Right lobe of liver (tissue), 6 donors: ENCODE measurements at regions of chr10 and their contacts with region 1.

Region 1: GRCh38 chr10:77641788-77642397 is 4.3 kb upstream of the KCNMA1 start:
- DNase-seq: peak in 1 of 3 donors; percentile 73
- ATAC-seq: peak; percentile 51 to 76 (median 70)
- H3K4me3 ChIP-seq: no peak overlapping the region
- H3K27ac ChIP-seq: no peak overlapping the region
- H3K4me1 ChIP-seq: peaks cover 0 to 5% (median 0%) of the 10 kb centered on the region in 4 donors
- H3K27me3 ChIP-seq: no peaks in the 10 kb centered on the region
- CTCF ChIP-seq: peak; percentile 83 to 89 (median 86)
- POLR2A ChIP-seq: no peak

Region 2: GRCh38 chr10:77165445-77166208 is 476.3 kb before region 1 on chr10:
- intact Hi-C with region 1: loop called in 1 of 2 experiments (anchors 5 kb)
- DNase-seq: peak in 1 of 3 donors; percentile 53
- ATAC-seq: peak; percentile 86 to 91 (median 90)
- H3K4me3 ChIP-seq: no peak overlapping the region
- H3K27ac ChIP-seq: no peak overlapping the region
- H3K4me1 ChIP-seq: no peaks in the 10 kb centered on the region
- H3K27me3 ChIP-seq: no peaks in the 10 kb centered on the region
- CTCF ChIP-seq: peak; percentile 72 to 75 (median 74)
- POLR2A ChIP-seq: no peak

Region 3: GRCh38 chr10:77391605-77392235 is 250.2 kb before region 1 on chr10:
- intact Hi-C with region 1: loop called in 1 of 2 experiments (anchors 5 kb)
- DNase-seq: peak in 2 of 3 donors; percentile 62 to 75
- ATAC-seq: peak; percentile 71 to 86 (median 80)
- H3K4me3 ChIP-seq: no peak overlapping the region
- H3K27ac ChIP-seq: no peak overlapping the region
- H3K4me1 ChIP-seq: no peaks in the 10 kb centered on the region
- H3K27me3 ChIP-seq: no peaks in the 10 kb centered on the region
- CTCF ChIP-seq: peak; percentile 44 to 62 (median 45)
- POLR2A ChIP-seq: no peak

Region 4: DNA sequence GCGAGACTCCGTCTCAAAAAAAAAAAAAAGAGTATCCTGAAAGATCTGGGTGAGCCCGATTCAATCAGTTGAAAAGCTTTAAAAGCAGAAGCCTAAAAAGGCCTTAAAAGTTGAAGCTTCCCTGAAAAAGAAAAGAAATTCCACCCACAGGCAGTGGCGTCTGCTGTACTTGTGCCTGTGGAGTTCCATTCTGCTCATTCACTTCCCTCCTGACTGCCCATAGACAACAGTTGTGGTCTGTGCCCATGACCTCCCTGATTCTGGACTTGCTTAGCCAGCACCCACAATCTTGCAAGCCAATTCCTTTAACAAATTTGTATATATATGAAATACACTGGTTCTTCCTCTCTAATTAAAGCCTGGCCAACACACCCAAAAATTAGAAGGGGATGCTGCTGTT is 143.0 kb after region 1 on chr10:
- intact Hi-C with region 1: no loop called
- DNase-seq: no peak
- ATAC-seq: no peak
- H3K4me3 ChIP-seq: no peak overlapping the region
- H3K27ac ChIP-seq: no peak overlapping the region
- H3K4me1 ChIP-seq: no peaks in the 10 kb centered on the region
- H3K27me3 ChIP-seq: no peaks in the 10 kb centered on the region
- CTCF ChIP-seq: no peak
- POLR2A ChIP-seq: no peak